ENCODE measurements at regions of chr22 and their contacts with region 1.

Region 1: GRCh38 chr22:49046546-49047361 is 780.9 kb downstream of the BRD1 start:
- DNase-seq: peak; percentile 67
- ATAC-seq: peak; percentile 51
- H3K4me3 Mint-ChIP-seq: no peak overlapping the region
- H3K27ac Mint-ChIP-seq: no peak overlapping the region
- H3K4me1 Mint-ChIP-seq: no peaks in the 10 kb centered on the region
- H3K27me3 Mint-ChIP-seq: peaks cover 8% of the 10 kb centered on the region

Region 2: GRCh38 chr22:49724893-49725474 is 678.2 kb after region 1 on chr22:
- CTCF ChIA-PET with region 1: no interaction called
- POLR2A ChIA-PET with region 1: no interaction called
- intact Hi-C with region 1: loop called in 1 of 2 experiments (anchors 5 kb)
- DNase-seq: peak; percentile 87
- ATAC-seq: peak; percentile 94
- H3K4me3 Mint-ChIP-seq: peak overlapping the region; percentile 47
- H3K27ac Mint-ChIP-seq: no peak overlapping the region
- H3K4me1 Mint-ChIP-seq: peaks cover 10% of the 10 kb centered on the region
- H3K27me3 Mint-ChIP-seq: peaks cover 28% of the 10 kb centered on the region